ENCODE measurements at regions of chr2 and their contacts with region 1.

Region 1: DNA sequence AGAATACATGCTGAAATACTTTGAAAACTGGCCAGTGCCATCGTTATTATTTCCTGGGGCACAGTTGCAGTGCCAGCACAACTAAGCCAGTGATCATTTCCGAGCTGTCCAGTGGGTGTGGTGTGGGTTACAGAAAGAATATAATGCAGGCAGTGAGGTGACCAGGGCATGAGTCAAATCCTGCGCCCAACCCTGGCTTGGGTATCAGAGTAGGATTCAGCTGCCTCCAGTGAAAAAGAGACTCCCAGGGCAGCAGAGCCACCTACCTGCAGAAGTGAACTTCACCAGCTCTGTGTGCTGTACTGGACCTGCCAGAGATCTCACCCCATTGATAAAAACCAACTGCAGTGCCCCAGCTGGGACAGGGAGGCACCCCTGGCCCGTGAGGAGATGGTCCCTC is 18.0 kb downstream of the SLC9A2 start:
- DNase-seq: no peak
- ATAC-seq: peak; percentile 3; the same call in 1 of the 3 replicates
- H3K4me3 ChIP-seq: no peak overlapping the region
- H3K27ac ChIP-seq: peak overlapping the region; percentile 86; the same call in 2 of the 3 replicates
- H3K4me1 ChIP-seq: peaks cover 12 to 47% of the 10 kb centered on the region in 2 experiments
- H3K27me3 ChIP-seq: no peaks in the 10 kb centered on the region
- CTCF ChIP-seq: peak; percentile 10 to 29 (median 27); a peak in 2 of 6 replicates
- EP300 ChIP-seq: no peak
- POLR2A ChIP-seq: no peak
- RAD21 ChIP-seq: peak in 1 of 2 experiments; percentile 21; a peak in 2 of 4 replicates

Region 2: GRCh38 chr2:102660070-102660469 is 22.7 kb after region 1 on chr2:
- CTCF ChIA-PET with region 1: no interaction called
- POLR2A ChIA-PET with region 1: interaction called, 5 read pairs
- in situ Hi-C with region 1: no loop called
- intact Hi-C with region 1: loop called (anchors 2 kb)
- DNase-seq: peak in 3 of 4 experiments; percentile 26 to 78 (median 41)
- ATAC-seq: peak; percentile 77
- H3K4me3 ChIP-seq: no peak overlapping the region
- H3K27ac ChIP-seq: peak overlapping the region; percentile 62; the same call in 2 of the 3 replicates
- H3K4me1 ChIP-seq: peaks cover 5 to 34% of the 10 kb centered on the region in 2 experiments; a peak in 4 of 5 replicates
- H3K27me3 ChIP-seq: no peaks in the 10 kb centered on the region
- CTCF ChIP-seq: no peak
- EP300 ChIP-seq: no peak
- POLR2A ChIP-seq: no peak
- RAD21 ChIP-seq: no peak

Measured in K562 (cell line).